Endothelial cell of umbilical vein (primary cell): ENCODE measurements at regions of chr2 and their contacts with region 1.

Region 1: DNA sequence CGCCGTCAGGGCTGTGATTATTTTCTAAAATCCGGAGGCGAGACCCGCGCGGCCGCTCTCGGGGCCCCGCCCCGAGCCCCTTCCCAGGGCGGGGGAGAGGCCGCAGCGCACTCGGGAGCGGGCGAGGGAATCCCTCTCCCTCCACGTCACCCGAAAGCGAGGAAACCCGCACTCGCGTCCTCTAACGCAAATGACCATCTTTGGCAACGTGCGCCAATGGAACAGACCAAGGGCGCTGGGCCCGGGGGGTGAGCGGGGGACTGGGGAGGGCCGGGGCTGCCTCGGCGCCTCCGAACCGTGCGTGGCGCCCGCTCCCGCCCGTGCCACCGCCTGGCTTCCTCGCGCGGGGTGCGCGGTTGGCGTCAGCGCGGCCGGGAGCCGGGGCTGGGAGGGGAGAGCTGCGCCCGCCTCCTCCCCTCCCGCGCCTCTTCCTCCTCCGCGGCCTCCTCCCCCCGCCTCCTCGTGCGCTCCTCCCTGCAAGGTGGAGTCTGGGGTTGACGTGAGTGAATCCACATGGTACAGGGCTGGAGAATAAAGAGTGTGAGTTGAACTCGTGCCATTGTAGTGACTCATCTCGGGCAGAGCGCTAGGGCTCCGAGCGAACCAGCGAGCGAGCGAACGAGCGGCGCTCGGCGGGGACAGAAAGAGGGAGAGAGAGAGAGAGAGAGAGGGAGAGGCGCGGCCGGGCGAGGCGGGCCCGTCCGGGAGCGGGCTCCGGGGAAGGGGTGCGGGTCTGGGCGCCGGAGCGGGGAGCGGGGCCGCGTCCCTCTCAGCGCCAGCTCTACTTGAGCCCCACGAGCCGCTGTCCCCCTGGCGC is at the start of gene FOSL2:
- DNase-seq: peak; percentile 100
- H3K4me3 ChIP-seq: peak within 1 kb of the TSS; percentile 77 to 97 (median 90)
- H3K27ac ChIP-seq: peak within 1 kb of the TSS; percentile 95
- H3K4me1 ChIP-seq: peaks cover 31% of the 10 kb centered on the region
- H3K27me3 ChIP-seq: no peaks in the 10 kb centered on the region
- CTCF ChIP-seq: no peak
- POLR2A ChIP-seq: peak; percentile 90
- total RNA-seq, gene FOSL2: 83.7 and 85.3 TPM in 2 replicates

Region 2: GRCh38 chr2:27221166-27221565 is 1171.3 kb before region 1 on chr2:
- CTCF ChIA-PET with region 1: no interaction called
- POLR2A ChIA-PET with region 1: no interaction called
- dilution Hi-C with region 1: no loop called
- intact Hi-C with region 1: no loop called
- DNase-seq: no peak
- H3K4me3 ChIP-seq: no peak overlapping the region
- H3K27ac ChIP-seq: no peak overlapping the region
- H3K4me1 ChIP-seq: peaks cover 16% of the 10 kb centered on the region
- H3K27me3 ChIP-seq: no peaks in the 10 kb centered on the region
- CTCF ChIP-seq: no peak
- POLR2A ChIP-seq: no peak

Region 3: DNA sequence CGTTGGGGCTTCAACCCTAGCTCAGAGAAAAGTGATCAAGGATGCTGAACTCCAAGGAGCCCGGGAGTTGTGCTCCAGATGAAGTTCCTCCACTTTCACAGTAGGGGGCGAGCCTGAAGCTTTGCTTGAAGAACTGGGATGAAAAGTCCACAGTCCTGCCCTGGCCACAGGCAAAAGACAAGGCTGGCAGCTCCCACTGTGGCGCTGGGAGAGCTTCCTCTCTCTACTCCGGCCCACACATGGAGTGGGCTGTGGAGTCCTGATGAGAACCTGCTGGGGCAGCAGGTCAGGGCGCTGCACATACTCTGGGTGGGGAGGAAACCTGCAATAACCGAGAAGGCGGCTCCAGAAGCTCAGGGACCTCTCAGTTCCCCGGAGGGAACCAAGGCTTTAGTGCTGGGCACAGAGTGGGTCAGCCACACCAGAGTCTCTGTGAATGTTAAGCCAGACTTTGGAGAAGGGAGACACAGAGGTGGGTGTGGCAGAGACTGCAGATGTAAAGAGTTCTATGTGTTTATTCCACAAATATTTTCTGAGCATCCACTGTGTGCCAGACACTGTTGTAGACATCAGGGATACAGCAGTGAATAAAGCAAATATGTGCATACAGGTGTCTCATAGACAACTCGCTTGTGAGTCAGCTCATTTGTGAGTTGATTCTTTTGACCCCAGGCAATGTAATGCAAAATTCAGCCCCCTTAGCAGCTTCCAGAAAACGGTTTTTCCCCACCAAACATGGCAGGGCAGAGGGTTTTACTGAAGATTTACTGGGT is 668.9 kb before region 1 on chr2:
- CTCF ChIA-PET with region 1: interaction called, 13 read pairs
- POLR2A ChIA-PET with region 1: interaction called, 4 read pairs
- dilution Hi-C with region 1: no loop called
- intact Hi-C with region 1: no loop called
- DNase-seq: peak; percentile 68
- H3K4me3 ChIP-seq: no peak overlapping the region
- H3K27ac ChIP-seq: no peak overlapping the region
- H3K4me1 ChIP-seq: peaks cover 14% of the 10 kb centered on the region
- H3K27me3 ChIP-seq: no peaks in the 10 kb centered on the region
- CTCF ChIP-seq: peak; percentile 78 to 90
- POLR2A ChIP-seq: no peak

Region 4: DNA sequence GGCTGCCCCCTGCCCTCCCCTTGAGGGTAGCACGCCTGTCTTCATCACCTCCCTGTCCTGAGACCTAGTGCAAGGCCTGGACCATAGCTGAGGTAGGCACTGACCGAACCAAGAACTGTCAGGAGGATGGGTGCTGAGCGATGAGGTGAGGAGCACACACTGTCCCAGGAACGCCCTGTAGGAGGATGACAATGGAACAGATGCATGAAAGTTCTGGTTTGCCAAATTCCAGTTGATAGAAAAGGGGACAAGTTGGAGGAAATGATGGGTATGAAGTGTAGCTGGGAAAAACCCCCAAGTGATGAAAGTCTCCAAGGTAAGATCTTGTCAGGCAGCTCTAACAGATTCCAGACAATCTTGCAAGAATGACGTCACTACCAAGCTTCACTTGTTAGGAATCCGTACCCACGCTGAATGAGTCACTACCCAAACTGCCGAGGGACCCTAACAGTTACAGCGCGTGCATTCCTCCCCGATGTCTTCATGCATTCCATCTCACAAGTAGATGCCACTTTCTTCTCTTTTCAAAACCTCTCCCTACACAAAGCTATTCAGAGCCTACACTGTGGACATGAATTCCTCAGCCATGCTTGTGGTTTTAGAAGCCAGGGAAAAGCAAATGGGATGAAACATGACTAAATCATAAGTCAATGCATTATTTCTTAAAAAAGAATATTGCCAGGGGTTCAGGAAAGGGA is 593.4 kb before region 1 on chr2:
- CTCF ChIA-PET with region 1: no interaction called
- POLR2A ChIA-PET with region 1: interaction called, 3 read pairs
- dilution Hi-C with region 1: no loop called
- intact Hi-C with region 1: loop called (anchors 1 kb)
- DNase-seq: peak; percentile 93
- H3K4me3 ChIP-seq: no peak overlapping the region
- H3K27ac ChIP-seq: peak overlapping the region; percentile 94
- H3K4me1 ChIP-seq: peaks cover 34% of the 10 kb centered on the region
- H3K27me3 ChIP-seq: no peaks in the 10 kb centered on the region
- CTCF ChIP-seq: no peak
- POLR2A ChIP-seq: no peak

Region 5: GRCh38 chr2:28036307-28036706 is 356.2 kb before region 1 on chr2:
- CTCF ChIA-PET with region 1: no interaction called
- POLR2A ChIA-PET with region 1: no interaction called
- dilution Hi-C with region 1: no loop called
- intact Hi-C with region 1: loop called (anchors 2 kb)
- DNase-seq: peak; percentile 48
- H3K4me3 ChIP-seq: no peak overlapping the region
- H3K27ac ChIP-seq: peak overlapping the region; percentile 33
- H3K4me1 ChIP-seq: peaks cover 18% of the 10 kb centered on the region
- H3K27me3 ChIP-seq: no peaks in the 10 kb centered on the region
- CTCF ChIP-seq: no peak
- POLR2A ChIP-seq: no peak

Region 6: DNA sequence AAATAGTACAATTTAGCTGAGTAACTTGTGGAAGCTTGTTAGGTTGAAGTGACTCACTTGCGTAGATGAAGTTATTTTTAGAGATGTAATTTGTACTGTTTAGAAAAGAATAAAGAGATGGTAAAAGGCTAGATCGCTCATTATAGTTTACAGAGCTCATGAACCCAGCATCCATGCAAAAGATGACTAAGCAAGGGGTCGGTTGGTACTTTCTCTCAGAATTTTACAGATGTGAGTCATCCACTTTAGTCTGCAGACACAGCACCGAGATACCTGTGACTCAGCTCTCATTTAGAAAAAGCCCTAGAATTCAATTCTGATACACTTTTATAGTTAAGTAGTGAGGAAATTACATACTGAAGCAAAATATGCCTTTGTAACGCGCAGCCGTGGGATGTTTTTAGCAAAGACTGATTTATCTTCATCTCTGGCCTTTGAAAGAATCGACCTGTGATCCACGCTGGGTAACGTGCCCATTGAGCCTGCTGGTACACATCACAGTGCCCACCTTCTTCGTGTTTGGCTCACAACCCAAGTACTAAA is 116.4 kb before region 1 on chr2:
- CTCF ChIA-PET with region 1: interaction called, 11 read pairs
- POLR2A ChIA-PET with region 1: interaction called, 10 read pairs
- dilution Hi-C with region 1: no loop called
- intact Hi-C with region 1: loop called (anchors 1 kb)
- DNase-seq: peak; percentile 96
- H3K4me3 ChIP-seq: no peak overlapping the region
- H3K27ac ChIP-seq: peak overlapping the region; percentile 98
- H3K4me1 ChIP-seq: peaks cover 29% of the 10 kb centered on the region
- H3K27me3 ChIP-seq: no peaks in the 10 kb centered on the region
- CTCF ChIP-seq: no peak
- POLR2A ChIP-seq: no peak

Region 7: GRCh38 chr2:28406276-28407096 is 14.0 kb after region 1 on chr2:
- CTCF ChIA-PET with region 1: interaction called, 14 read pairs
- POLR2A ChIA-PET with region 1: interaction called, 15 read pairs
- dilution Hi-C with region 1: no loop called
- intact Hi-C with region 1: no loop called
- DNase-seq: peak; percentile 52
- H3K4me3 ChIP-seq: no peak overlapping the region
- H3K27ac ChIP-seq: peak overlapping the region; percentile 79
- H3K4me1 ChIP-seq: peaks cover 73% of the 10 kb centered on the region
- H3K27me3 ChIP-seq: no peaks in the 10 kb centered on the region
- CTCF ChIP-seq: peak in 1 of 2 donors; percentile 10
- POLR2A ChIP-seq: no peak